Right ventricle myocardium superior (tissue), 1 donor: ENCODE measurements at regions of chr2 and their contacts with region 1.

Region 1: GRCh38 chr2:100262555-100263320 is 59.6 kb downstream of the LONRF2 start:
- DNase-seq: peak; percentile 84
- ATAC-seq: peak; percentile 77

Region 2: GRCh38 chr2:100381240-100381639 is 118.5 kb after region 1 on chr2:
- intact Hi-C with region 1: loop called (anchors 2 kb)
- DNase-seq: peak; percentile 65
- ATAC-seq: peak; percentile 84

Region 3: DNA sequence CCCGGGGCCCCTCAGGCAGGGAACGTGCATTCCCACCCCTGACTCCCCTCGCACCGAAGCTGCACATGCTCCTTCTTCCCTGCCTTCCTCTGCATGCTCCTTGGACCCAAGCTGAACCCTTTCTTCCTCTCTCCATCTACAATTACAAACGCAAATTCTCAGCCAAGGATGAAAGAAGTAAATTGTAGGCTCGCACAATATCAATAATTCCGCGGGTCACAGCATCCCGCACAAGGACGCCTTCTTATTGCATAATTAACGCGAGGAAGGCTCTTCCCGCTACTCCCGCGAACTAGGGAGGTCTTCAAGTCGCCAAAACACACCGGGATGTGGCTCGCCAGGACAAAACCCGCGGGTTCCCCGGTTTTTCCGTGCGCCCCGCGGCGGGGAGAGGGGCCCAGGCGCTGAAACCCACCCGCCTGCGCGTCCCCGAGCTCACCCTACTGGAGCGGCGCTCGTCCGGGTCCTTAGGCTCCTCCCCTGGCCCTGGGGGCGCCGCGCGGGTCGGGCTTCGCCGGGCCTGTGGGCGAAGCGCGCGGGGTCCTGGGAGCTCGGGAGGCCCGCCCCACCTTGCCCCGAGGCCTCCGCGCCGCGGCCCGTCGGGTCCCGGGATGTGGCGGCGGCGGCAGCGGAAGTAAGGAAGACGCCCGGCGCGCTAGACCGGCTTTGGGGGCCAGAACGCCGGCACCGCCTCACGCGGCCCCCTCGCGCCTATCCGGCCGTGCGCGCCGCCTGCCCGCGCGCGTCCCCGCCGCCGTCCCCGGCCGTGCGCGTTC is 154.4 kb after region 1 on chr2 and contains the start of gene CHST10:
- intact Hi-C with region 1: no loop called
- DNase-seq: peak; percentile 71
- ATAC-seq: peak; percentile 95
- total RNA-seq, gene CHST10: 11.7 TPM

Region 4: DNA sequence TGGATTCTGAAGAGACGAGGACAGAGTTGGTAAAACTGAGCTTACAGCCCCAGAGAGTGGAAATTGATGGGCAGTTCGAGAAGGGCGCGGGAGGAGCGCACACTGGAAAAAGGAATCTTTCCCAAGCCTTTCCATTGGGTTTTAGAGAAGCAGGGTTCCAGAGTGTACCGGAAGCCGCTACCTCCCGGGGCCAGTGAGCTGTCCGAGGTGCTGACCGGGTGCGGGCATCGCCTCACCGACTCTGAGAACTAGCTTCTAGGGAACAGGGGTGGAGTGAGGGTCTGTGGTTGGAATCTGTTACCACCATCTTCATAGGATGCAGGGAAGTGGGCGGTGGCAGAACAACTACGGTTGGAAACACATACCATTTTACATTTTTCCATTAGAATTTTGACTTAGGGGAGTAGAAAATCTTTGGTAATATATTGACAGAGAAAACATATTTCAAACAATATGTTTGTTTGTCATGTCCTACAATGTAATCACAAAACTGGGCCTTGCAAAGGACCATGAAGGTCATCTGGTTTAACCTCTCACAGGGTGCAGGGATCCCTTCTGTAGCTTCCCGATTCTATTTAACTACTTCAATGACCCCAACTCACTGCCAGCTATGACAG is 208.3 kb after region 1 on chr2:
- intact Hi-C with region 1: no loop called
- DNase-seq: no peak
- ATAC-seq: no peak